Mammary epithelial cell (primary cell): ENCODE measurements at regions of chrX and their contacts with region 1.

Region 1: GRCh38 chrX:56764153-56764974 is 35.3 kb downstream of the NBDY start:
- DNase-seq: peak; percentile 79
- H3K4me3 ChIP-seq: peak overlapping the region; percentile 52 to 72 (median 64)
- H3K27ac ChIP-seq: peak overlapping the region; percentile 10
- H3K4me1 ChIP-seq: peaks cover 15% of the 10 kb centered on the region
- H3K27me3 ChIP-seq: no peaks in the 10 kb centered on the region
- CTCF ChIP-seq: peak; percentile 68 to 74

Region 2: GRCh38 chrX:57573754-57574153 is 809.4 kb after region 1 on chrX:
- CTCF ChIA-PET with region 1: no interaction called
- dilution Hi-C with region 1: no loop called
- in situ Hi-C with region 1: no loop called
- intact Hi-C with region 1: loop called (anchors 10 kb)
- DNase-seq: no peak
- H3K4me3 ChIP-seq: no peak overlapping the region
- H3K27ac ChIP-seq: no peak overlapping the region
- H3K4me1 ChIP-seq: no peaks in the 10 kb centered on the region
- H3K27me3 ChIP-seq: no peaks in the 10 kb centered on the region
- CTCF ChIP-seq: peak; percentile 45 to 58